Right ventricle myocardium superior (tissue), 1 donor: ENCODE measurements at regions of chr10 and their contacts with region 1.

Region 1: GRCh38 chr10:104209575-104210198 is 22.5 kb downstream of the CFAP43 start:
- DNase-seq: no peak
- ATAC-seq: peak; percentile 64

Region 2: GRCh38 chr10:103888113-103888841 is 321.4 kb before region 1 on chr10:
- intact Hi-C with region 1: loop called (anchors 5 kb)
- DNase-seq: peak; percentile 69
- ATAC-seq: peak; percentile 64

Region 3: GRCh38 chr10:104002911-104003310 is 206.8 kb before region 1 on chr10:
- intact Hi-C with region 1: no loop called
- DNase-seq: no peak
- ATAC-seq: no peak

Region 4: DNA sequence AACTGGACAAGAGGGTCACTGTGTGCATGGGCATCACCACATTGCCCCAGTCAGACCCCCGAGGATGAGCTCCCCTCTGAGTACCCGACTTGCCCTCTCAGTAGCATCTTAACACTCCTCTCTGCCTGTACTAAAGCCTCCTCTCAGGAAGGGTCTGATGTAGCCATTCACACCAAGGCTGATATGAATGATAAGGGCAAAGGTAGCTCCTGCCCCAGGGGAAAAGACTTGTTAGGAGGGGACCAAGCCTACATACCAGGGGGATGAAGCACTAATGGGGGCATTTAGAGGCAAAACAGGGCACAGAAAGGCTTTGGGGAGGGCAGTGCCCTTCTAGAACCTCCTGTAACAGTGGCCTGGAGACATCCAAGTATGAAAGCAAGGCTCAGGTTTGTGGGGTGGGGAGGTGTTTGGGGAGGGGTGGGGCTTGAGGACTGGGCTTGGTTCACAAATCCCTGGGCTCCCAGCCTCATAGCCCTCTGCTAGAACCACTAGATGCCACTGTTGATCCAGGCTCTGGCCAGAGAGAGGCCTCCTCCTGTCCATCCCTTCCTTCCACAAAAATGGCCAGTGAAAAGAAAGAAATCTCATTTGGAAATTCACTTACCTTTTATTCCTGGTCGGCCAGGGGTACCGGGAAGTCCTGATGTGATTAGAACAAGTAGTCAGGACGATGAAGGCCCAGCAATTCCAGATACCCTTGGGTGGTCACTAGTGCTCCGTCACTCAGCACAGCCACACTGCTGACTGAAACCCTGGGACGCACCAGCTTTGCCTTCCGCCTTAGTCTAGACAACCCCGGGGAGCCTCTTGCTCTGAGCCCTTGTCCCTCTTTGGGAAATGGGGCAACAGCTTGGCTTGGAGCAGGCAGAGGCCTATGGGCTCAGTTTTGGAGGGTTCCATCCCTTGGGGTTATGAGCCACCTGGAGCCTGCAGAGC is 164.3 kb before region 1 on chr10:
- intact Hi-C with region 1: loop called (anchors 5 kb)
- DNase-seq: no peak
- ATAC-seq: peak; percentile 83